ENCODE measurements at regions of chr11 and their contacts with region 1.

Region 1: GRCh38 chr11:12963792-12964536 is 45.2 kb upstream of the RASSF10 start:
- DNase-seq: peak; percentile 40
- ATAC-seq: peak; percentile 49
- H3K4me3 Mint-ChIP-seq: no peak overlapping the region
- H3K27ac Mint-ChIP-seq: no peak overlapping the region
- H3K4me1 Mint-ChIP-seq: no peaks in the 10 kb centered on the region
- H3K27me3 Mint-ChIP-seq: no peaks in the 10 kb centered on the region
- CTCF ChIP-seq: no peak

Region 2: GRCh38 chr11:12802418-12803085 is 161.4 kb before region 1 on chr11:
- CTCF ChIA-PET with region 1: no interaction called
- POLR2A ChIA-PET with region 1: no interaction called
- intact Hi-C with region 1: no loop called
- DNase-seq: no peak
- ATAC-seq: no peak
- H3K4me3 Mint-ChIP-seq: no peak overlapping the region
- H3K27ac Mint-ChIP-seq: no peak overlapping the region
- H3K4me1 Mint-ChIP-seq: no peaks in the 10 kb centered on the region
- H3K27me3 Mint-ChIP-seq: peaks cover 16% of the 10 kb centered on the region
- CTCF ChIP-seq: no peak

Region 3: DNA sequence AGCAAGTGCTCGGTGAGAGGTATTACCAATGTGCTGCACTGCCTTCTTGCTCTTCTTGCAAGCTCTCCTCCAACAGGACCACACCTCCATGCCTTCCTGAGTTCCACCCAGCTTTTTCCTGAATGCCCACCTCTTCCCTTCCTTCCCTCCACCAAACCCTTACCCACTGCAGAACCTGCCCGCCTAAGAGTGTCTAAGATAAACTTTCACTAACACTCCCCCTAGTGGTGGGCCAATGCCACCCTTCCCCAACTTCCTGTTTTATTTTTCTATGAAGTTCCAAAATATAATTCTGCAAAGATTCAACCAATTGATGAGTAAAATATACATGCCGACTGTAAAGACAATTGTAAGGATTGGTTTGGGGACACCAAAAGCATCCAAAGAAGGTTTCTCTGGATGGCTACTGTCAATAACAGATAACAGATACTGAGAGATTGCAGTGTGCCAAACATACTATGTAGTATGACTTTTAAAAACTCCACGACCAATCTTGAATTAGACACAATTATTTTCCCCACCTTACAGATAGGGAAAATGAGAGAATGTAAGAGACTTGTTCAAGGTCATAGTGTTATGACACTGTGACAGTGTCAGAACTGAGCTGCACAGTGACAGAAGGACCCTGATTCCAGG is 275.0 kb after region 1 on chr11:
- CTCF ChIA-PET with region 1: no interaction called
- POLR2A ChIA-PET with region 1: no interaction called
- intact Hi-C with region 1: loop called (anchors 1 kb)
- DNase-seq: no peak
- ATAC-seq: peak; percentile 47
- H3K4me3 Mint-ChIP-seq: no peak overlapping the region
- H3K27ac Mint-ChIP-seq: no peak overlapping the region
- H3K4me1 Mint-ChIP-seq: no peaks in the 10 kb centered on the region
- H3K27me3 Mint-ChIP-seq: peaks cover 5% of the 10 kb centered on the region
- CTCF ChIP-seq: no peak

Region 4: DNA sequence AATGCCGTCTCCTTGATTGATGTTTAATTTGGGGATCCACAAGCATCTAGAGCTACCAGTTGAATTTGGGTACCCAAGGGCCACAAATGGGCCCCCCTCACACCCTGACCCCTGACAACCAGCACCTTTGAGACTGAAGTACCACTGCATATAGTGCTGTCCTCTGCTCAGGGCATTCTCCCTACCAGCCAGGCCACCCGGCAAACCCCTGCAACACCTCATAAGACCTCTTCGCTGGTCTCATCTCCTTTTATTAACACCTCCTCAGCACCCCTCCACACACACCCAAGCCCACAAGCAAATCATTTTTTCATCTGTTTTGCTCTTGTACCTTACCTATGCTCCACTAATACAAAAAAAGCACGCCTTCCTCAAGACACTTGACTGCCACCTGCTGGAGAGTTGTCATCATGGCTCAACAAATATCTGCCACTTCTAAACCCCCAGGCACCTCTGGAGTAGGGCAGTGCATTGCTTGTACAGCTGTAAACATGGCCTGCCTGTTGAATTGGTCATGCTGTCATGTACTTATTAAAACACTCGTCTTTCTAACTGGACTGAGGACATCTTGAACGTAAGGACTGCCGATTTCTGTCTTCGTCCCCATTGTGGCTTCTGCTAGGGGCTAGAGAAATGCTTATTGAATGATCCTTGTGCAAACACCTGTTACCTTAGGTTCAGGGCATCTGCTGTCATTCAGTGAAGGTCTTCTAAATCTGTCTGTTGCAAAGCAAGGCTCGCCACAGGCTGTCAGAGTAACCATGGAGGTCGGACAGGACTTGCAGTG is 380.2 kb after region 1 on chr11:
- CTCF ChIA-PET with region 1: interaction called, 22 read pairs
- POLR2A ChIA-PET with region 1: no interaction called
- intact Hi-C with region 1: loop called (anchors 1 kb)
- DNase-seq: peak; percentile 26
- ATAC-seq: peak; percentile 63
- H3K4me3 Mint-ChIP-seq: no peak overlapping the region
- H3K27ac Mint-ChIP-seq: no peak overlapping the region
- H3K4me1 Mint-ChIP-seq: peaks cover 47% of the 10 kb centered on the region
- H3K27me3 Mint-ChIP-seq: no peaks in the 10 kb centered on the region
- CTCF ChIP-seq: peak; percentile 49

Region 5: DNA sequence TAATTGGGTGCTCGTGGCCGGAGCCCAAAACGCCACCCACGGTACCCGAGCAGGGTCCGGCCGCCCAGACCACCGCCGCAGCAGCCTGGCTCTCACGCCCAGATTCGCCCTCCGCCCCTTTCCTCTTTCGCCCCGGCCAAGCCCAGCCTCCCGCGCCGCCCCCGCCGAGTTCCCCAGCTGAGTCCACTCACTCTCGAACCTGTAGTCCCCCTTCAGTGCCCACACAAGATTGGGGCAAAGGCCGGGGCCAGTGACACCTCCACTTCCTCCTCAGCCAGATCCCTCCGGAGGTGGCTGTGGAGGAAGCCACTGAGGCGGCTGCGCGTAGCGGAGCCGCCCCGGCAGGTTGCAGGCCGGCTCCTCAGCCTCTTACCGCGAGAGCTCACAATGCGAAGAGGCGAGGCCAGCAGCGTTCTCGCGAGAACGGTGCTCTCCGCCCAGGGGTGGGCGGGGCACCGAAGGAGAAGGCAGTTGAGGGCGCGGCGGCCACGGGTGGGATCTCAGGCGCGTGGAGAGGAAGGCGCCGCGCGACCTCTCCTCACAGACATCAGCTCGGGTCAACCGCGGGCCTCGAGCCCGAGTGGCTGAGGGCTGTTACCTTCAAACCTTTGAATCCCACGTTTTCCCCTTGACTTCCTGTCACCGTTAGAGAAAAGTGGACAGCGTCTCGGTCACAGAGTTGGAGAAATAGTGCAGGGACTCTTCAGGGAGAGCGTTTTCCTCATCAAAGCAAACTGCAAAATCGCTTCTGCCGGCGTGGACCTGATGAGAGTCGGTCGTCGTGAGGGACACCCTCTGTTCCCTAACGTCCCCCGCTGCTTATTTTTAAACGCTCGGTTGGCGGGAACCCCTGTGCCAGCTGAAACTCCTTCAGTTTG is 499.2 kb after region 1 on chr11 and contains the start of gene BTBD10:
- CTCF ChIA-PET with region 1: no interaction called
- POLR2A ChIA-PET with region 1: no interaction called
- intact Hi-C with region 1: loop called (anchors 2 kb)
- DNase-seq: peak; percentile 91
- ATAC-seq: peak; percentile 98
- H3K4me3 Mint-ChIP-seq: peak within 1 kb of the TSS; percentile 98
- H3K27ac Mint-ChIP-seq: peak within 1 kb of the TSS; percentile 95
- H3K4me1 Mint-ChIP-seq: peaks cover 43% of the 10 kb centered on the region
- H3K27me3 Mint-ChIP-seq: no peaks in the 10 kb centered on the region
- CTCF ChIP-seq: no peak
- total RNA-seq, gene BTBD10: 18.8 and 25.1 TPM in 2 replicates